ENCODE measurements at regions of chr10 and their contacts with region 1.

Region 1: DNA sequence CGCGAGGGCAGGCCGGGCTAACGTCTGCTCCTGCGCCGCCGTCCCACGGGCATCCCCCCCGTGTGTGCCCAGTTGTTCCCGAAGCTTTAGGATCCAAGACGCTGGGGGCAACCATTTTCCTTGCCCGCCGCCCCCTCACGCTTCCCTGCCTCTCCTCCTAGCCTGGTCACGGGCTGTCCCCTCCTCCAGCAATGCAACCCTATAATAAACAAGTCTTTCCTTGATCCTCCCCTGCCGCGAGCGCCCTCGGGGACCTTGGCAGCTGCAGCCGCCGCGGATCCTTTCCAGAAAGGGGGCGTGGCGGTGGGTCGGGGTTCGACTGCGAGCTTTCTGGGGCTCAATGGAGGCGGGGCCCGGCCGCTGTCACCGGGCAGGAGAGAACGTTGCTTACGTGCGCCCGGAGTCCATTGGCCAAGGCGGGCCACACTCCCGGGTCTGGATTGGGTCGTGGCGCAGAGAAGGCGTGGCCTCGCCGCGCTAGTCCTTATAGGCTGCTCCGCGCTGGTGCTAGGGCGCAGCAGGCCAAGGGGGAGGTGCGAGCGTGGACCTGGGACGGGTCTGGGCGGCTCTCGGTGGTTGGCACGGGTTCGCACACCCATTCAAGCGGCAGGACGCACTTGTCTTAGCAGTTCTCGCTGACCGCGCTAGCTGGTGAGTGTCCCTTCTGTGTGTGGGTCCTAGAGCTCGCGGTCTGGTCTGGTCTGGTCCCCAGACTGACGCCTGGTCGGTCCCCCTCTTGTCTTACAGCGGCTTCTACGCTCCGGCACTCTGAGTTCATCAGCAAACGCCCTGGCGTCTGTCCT is at the start of gene DDIT4:
- DNase-seq: peak; percentile 99
- H3K4me3 Mint-ChIP-seq: peak within 1 kb of the TSS; percentile 98
- H3K27ac Mint-ChIP-seq: peak within 1 kb of the TSS; percentile 96
- H3K4me1 Mint-ChIP-seq: peaks cover 56% of the 10 kb centered on the region
- H3K27me3 Mint-ChIP-seq: no peaks in the 10 kb centered on the region
- total RNA-seq, gene DDIT4: 166 to 189 TPM

Region 2: GRCh38 chr10:72126184-72126871 is 147.3 kb before region 1 on chr10:
- CTCF ChIA-PET with region 1: interaction called, 10 read pairs
- POLR2A ChIA-PET with region 1: no interaction called
- DNase-seq: no peak
- H3K4me3 Mint-ChIP-seq: no peak overlapping the region
- H3K27ac Mint-ChIP-seq: no peak overlapping the region
- H3K4me1 Mint-ChIP-seq: peaks cover 43% of the 10 kb centered on the region
- H3K27me3 Mint-ChIP-seq: no peaks in the 10 kb centered on the region

Region 3: GRCh38 chr10:72146071-72146470 is 127.5 kb before region 1 on chr10:
- CTCF ChIA-PET with region 1: no interaction called
- POLR2A ChIA-PET with region 1: no interaction called
- DNase-seq: no peak
- H3K4me3 Mint-ChIP-seq: no peak overlapping the region
- H3K27ac Mint-ChIP-seq: peak overlapping the region; percentile 28
- H3K4me1 Mint-ChIP-seq: peaks cover 6% of the 10 kb centered on the region
- H3K27me3 Mint-ChIP-seq: no peaks in the 10 kb centered on the region

Region 4: GRCh38 chr10:72204296-72204695 is 69.3 kb before region 1 on chr10:
- CTCF ChIA-PET with region 1: no interaction called
- POLR2A ChIA-PET with region 1: no interaction called
- DNase-seq: no peak
- H3K4me3 Mint-ChIP-seq: no peak overlapping the region
- H3K27ac Mint-ChIP-seq: no peak overlapping the region
- H3K4me1 Mint-ChIP-seq: peaks cover 14% of the 10 kb centered on the region
- H3K27me3 Mint-ChIP-seq: no peaks in the 10 kb centered on the region

Region 5: GRCh38 chr10:72235544-72236279 is 37.9 kb before region 1 on chr10:
- CTCF ChIA-PET with region 1: interaction called, 11 read pairs
- POLR2A ChIA-PET with region 1: no interaction called
- DNase-seq: no peak
- H3K4me3 Mint-ChIP-seq: no peak overlapping the region
- H3K27ac Mint-ChIP-seq: no peak overlapping the region
- H3K4me1 Mint-ChIP-seq: peaks cover 9% of the 10 kb centered on the region
- H3K27me3 Mint-ChIP-seq: no peaks in the 10 kb centered on the region

Region 6: GRCh38 chr10:72260588-72261322 is 12.9 kb before region 1 on chr10:
- CTCF ChIA-PET with region 1: interaction called, 49 read pairs
- POLR2A ChIA-PET with region 1: interaction called, 3 read pairs
- DNase-seq: peak; percentile 89
- H3K4me3 Mint-ChIP-seq: peak overlapping the region; percentile 73
- H3K27ac Mint-ChIP-seq: peak overlapping the region; percentile 91
- H3K4me1 Mint-ChIP-seq: peaks cover 63% of the 10 kb centered on the region
- H3K27me3 Mint-ChIP-seq: no peaks in the 10 kb centered on the region

Region 7: GRCh38 chr10:72297968-72298773 is 24.6 kb after region 1 on chr10:
- CTCF ChIA-PET with region 1: interaction called, 45 read pairs
- POLR2A ChIA-PET with region 1: interaction called, 15 read pairs
- DNase-seq: peak; percentile 95
- H3K4me3 Mint-ChIP-seq: peak overlapping the region; percentile 82
- H3K27ac Mint-ChIP-seq: peak overlapping the region; percentile 97
- H3K4me1 Mint-ChIP-seq: peaks cover 70% of the 10 kb centered on the region
- H3K27me3 Mint-ChIP-seq: no peaks in the 10 kb centered on the region

Region 8: GRCh38 chr10:72319416-72320254 is 46.0 kb after region 1 on chr10:
- CTCF ChIA-PET with region 1: interaction called, 31 read pairs
- POLR2A ChIA-PET with region 1: interaction called, 10 read pairs
- DNase-seq: peak; percentile 89
- H3K4me3 Mint-ChIP-seq: peak overlapping the region; percentile 69
- H3K27ac Mint-ChIP-seq: peak overlapping the region; percentile 95
- H3K4me1 Mint-ChIP-seq: peaks cover 83% of the 10 kb centered on the region
- H3K27me3 Mint-ChIP-seq: no peaks in the 10 kb centered on the region

Region 9: DNA sequence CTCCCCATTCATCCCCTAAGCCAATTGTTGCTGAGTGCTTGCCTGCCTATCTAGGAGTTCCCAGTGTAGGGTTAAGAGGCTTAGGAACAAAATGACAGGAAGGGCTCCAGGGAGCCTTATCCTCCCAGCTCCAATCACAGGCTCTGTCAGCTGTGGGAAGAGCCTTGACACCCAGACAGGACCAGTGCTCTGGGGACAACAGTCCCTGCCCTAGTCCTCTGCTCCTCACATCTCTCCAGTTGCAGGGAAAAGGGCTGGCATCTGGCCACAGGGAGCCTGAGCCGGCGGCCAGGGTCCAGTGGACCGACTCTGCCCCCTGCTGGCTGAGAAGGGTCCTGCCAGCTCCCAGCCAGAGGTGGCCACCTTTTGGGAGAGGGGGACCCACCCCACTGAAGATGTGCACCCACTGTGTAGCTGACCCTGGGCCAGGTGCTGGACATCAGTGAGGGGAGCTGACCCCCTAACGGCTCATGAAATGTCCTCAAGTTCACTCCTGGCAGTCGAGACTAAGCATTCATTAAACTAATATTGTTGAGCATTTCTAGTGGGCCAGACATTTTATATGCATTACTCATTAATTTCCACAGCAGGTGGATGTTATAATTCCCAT is 63.5 kb after region 1 on chr10:
- CTCF ChIA-PET with region 1: interaction called, 37 read pairs
- POLR2A ChIA-PET with region 1: interaction called, 5 read pairs
- DNase-seq: peak; percentile 60
- H3K4me3 Mint-ChIP-seq: no peak overlapping the region
- H3K27ac Mint-ChIP-seq: peak overlapping the region; percentile 47
- H3K4me1 Mint-ChIP-seq: peaks cover 71% of the 10 kb centered on the region
- H3K27me3 Mint-ChIP-seq: no peaks in the 10 kb centered on the region